A673 (cell line): ENCODE measurements at regions of chr7 and their contacts with region 1.

Region 1: DNA sequence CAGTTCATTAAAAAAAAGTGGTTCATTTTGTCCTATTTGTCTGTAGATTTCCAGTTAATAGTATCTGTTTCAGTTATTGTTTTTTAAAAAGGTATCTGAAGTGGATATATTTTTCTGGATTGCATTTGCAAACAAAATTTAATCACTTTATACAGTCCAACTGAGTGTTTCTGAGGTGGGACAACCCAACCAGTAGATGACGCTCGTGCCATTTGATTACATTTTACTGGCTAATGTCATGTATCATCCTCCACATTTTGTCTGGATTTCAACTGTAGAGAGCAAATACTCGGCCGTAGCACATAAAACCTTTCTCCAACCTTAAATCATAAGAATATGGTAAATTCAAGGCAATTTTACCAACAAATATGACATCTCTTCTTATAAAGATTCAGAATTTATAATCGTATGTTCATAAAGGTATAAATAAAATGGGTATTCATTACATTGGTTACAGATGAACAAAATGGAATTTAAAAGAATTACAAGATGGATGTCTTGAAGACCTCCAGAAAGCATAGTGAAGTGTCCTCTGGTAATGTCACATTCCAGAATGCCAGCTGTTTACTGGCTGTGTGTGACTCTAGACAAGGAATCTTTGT is 789.0 kb downstream of the PHTF2 start:
- DNase-seq: peak; percentile 66
- H3K4me3 ChIP-seq: no peak overlapping the region
- H3K27ac ChIP-seq: no peak overlapping the region
- H3K4me1 ChIP-seq: no peaks in the 10 kb centered on the region
- H3K27me3 ChIP-seq: peaks cover 11% of the 10 kb centered on the region
- CTCF ChIP-seq: peak; percentile 72

Region 2: DNA sequence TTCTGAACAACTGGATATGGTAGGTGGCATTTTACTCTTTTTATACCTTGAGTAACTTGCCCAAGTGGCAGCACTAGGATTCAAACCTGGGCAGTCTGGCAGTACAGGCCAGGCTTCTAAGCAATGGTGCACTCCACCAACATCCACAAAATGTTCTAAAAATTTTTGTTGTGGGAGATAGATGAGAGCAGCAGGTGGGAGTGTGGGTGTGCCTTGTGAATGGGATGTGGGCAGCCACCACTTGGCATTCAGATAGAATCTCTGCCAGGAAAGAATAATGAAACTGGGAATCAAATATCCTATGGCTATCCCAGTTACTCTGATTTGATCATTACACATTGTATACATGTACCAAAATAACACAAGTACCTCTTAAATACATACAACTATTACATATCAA is 55.2 kb after region 1 on chr7:
- CTCF ChIA-PET with region 1: no interaction called
- POLR2A ChIA-PET with region 1: no interaction called
- intact Hi-C with region 1: no loop called
- DNase-seq: no peak
- H3K4me3 ChIP-seq: no peak overlapping the region
- H3K27ac ChIP-seq: no peak overlapping the region
- H3K4me1 ChIP-seq: no peaks in the 10 kb centered on the region
- H3K27me3 ChIP-seq: no peaks in the 10 kb centered on the region
- CTCF ChIP-seq: no peak

Region 3: GRCh38 chr7:78662948-78663347 is 75.4 kb after region 1 on chr7:
- CTCF ChIA-PET with region 1: no interaction called
- POLR2A ChIA-PET with region 1: no interaction called
- intact Hi-C with region 1: no loop called
- DNase-seq: no peak
- H3K4me3 ChIP-seq: no peak overlapping the region
- H3K27ac ChIP-seq: no peak overlapping the region
- H3K4me1 ChIP-seq: no peaks in the 10 kb centered on the region
- H3K27me3 ChIP-seq: peaks cover 4% of the 10 kb centered on the region
- CTCF ChIP-seq: no peak

Region 4: GRCh38 chr7:78691584-78691983 is 104.0 kb after region 1 on chr7:
- CTCF ChIA-PET with region 1: no interaction called
- POLR2A ChIA-PET with region 1: no interaction called
- intact Hi-C with region 1: no loop called
- DNase-seq: no peak
- H3K4me3 ChIP-seq: no peak overlapping the region
- H3K27ac ChIP-seq: no peak overlapping the region
- H3K4me1 ChIP-seq: no peaks in the 10 kb centered on the region
- H3K27me3 ChIP-seq: peaks cover 15% of the 10 kb centered on the region
- CTCF ChIP-seq: no peak

Region 5: DNA sequence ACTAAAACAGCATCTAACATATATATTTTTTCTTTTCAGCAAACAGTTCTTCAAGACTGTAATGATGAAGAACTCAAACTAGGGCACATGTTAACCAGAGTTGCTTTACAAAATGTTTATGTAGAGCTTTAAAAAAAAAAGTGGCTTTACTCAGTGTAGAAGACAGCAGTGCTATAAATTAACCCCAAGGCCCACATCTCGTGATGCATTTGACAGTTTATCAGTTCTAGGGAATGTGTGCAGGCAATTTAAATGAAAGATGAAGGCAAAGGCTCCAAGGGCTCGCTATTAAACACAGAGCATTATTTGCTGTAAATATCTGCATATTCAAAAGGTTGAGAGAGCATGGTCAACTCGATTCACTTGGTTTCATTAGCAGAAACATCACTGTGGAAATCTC is 307.8 kb after region 1 on chr7:
- CTCF ChIA-PET with region 1: no interaction called
- POLR2A ChIA-PET with region 1: no interaction called
- intact Hi-C with region 1: no loop called
- DNase-seq: no peak
- H3K4me3 ChIP-seq: no peak overlapping the region
- H3K27ac ChIP-seq: no peak overlapping the region
- H3K4me1 ChIP-seq: no peaks in the 10 kb centered on the region
- H3K27me3 ChIP-seq: no peaks in the 10 kb centered on the region
- CTCF ChIP-seq: no peak

Region 6: DNA sequence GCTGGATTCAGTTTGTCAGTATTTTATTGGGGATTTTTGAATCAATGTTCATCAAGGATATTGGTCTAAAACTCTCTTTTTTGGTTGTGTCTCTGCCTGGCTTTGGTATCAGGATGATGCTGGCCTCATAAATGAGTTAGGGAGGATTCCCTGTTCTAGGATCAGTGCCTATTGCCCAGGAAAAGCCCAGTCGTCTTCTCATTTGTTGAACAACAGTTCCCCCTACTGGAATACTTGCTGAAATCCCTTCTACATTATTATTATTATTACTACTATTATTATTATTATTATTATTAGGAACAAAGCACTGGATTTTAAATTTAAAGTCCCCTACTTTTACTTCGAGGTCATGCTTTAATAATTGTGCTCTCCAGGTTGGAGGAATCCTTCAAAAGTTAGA is 337.0 kb after region 1 on chr7:
- CTCF ChIA-PET with region 1: no interaction called
- POLR2A ChIA-PET with region 1: no interaction called
- intact Hi-C with region 1: loop called (anchors 2 kb)
- DNase-seq: peak; percentile 40
- H3K4me3 ChIP-seq: no peak overlapping the region
- H3K27ac ChIP-seq: no peak overlapping the region
- H3K4me1 ChIP-seq: no peaks in the 10 kb centered on the region
- H3K27me3 ChIP-seq: peaks cover 5% of the 10 kb centered on the region
- CTCF ChIP-seq: peak; percentile 49

Region 7: GRCh38 chr7:79176859-79177477 is 589.4 kb after region 1 on chr7:
- CTCF ChIA-PET with region 1: no interaction called
- POLR2A ChIA-PET with region 1: no interaction called
- intact Hi-C with region 1: loop called (anchors 5 kb)
- DNase-seq: peak; percentile 71
- H3K4me3 ChIP-seq: no peak overlapping the region
- H3K27ac ChIP-seq: no peak overlapping the region
- H3K4me1 ChIP-seq: no peaks in the 10 kb centered on the region
- H3K27me3 ChIP-seq: no peaks in the 10 kb centered on the region
- CTCF ChIP-seq: peak; percentile 73

Region 8: GRCh38 chr7:79282063-79282694 is 694.6 kb after region 1 on chr7:
- CTCF ChIA-PET with region 1: no interaction called
- POLR2A ChIA-PET with region 1: no interaction called
- intact Hi-C with region 1: loop called (anchors 10 kb)
- DNase-seq: peak; percentile 65
- H3K4me3 ChIP-seq: no peak overlapping the region
- H3K27ac ChIP-seq: no peak overlapping the region
- H3K4me1 ChIP-seq: no peaks in the 10 kb centered on the region
- H3K27me3 ChIP-seq: no peaks in the 10 kb centered on the region
- CTCF ChIP-seq: peak; percentile 57